MCF 10A (cell line): ENCODE measurements at regions of chr11 and their contacts with region 1.

Region 1: GRCh38 chr11:67583247-67584204 is at the start of gene GSTP1:
- DNase-seq: peak; percentile 89
- H3K4me3 Mint-ChIP-seq: peak within 1 kb of the TSS; percentile 84
- H3K27ac Mint-ChIP-seq: peak within 1 kb of the TSS; percentile 96
- H3K4me1 Mint-ChIP-seq: peaks cover 49% of the 10 kb centered on the region
- H3K27me3 Mint-ChIP-seq: peaks cover 18% of the 10 kb centered on the region
- CTCF ChIP-seq: peak; percentile 58
- total RNA-seq, gene GSTP1: 1,641 and 1,733 TPM in 2 replicates

Region 2: DNA sequence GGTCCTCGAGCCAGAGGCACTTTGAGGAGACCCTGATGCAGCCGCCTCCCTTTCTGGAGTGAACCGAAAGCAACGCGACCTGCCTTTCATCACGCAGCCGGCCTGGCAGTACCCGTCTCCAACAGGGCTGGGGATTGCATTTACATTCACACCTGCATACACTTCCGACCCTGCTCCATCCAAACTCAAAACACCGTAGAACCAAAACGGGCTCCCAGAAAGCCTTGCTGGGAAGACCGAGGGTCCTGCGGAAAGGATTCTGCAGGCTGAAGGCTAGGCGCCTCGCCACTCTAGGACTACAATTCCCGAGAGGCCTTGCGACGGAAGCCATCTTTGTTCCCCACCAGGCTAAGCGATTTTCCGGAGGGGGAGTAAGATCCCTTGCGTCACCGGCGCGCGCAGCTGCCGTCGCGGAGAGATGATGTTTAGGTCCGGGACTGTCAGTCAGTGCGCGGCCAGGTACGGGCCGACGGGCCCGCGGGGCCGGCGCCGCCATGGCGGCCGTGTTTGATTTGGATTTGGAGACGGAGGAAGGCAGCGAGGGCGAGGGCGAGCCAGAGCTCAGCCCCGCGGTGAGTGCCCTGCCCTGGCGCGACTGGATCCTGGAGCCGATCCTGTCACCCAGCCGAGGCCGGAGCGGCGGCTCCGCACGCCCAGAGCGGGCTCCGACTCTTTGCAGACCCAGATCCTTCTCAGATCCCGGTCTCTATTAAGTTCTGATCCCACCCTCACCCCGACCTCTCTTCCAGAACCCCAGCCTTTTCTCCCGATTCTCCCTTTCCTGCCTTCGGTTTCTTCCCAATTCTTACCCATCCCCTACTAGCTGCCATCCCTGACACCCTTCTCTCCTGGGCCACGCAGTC is 155.2 kb before region 1 on chr11 and contains the start of gene RPS6KB2:
- CTCF ChIA-PET with region 1: no interaction called
- POLR2A ChIA-PET with region 1: interaction called, 12 read pairs
- intact Hi-C with region 1: no loop called
- DNase-seq: peak; percentile 97
- H3K4me3 Mint-ChIP-seq: peak within 1 kb of the TSS; percentile 96
- H3K27ac Mint-ChIP-seq: peak within 1 kb of the TSS; percentile 92
- H3K4me1 Mint-ChIP-seq: peaks cover under 1% of the 10 kb centered on the region
- H3K27me3 Mint-ChIP-seq: no peaks in the 10 kb centered on the region
- CTCF ChIP-seq: no peak
- total RNA-seq, gene RPS6KB2: 49.8 and 60.1 TPM in 2 replicates

Region 3: GRCh38 chr11:67572747-67573419 is 10.6 kb before region 1 on chr11:
- CTCF ChIA-PET with region 1: interaction called, 34 read pairs
- POLR2A ChIA-PET with region 1: interaction called, 34 read pairs
- intact Hi-C with region 1: loop called (anchors 1 kb)
- DNase-seq: peak; percentile 78
- H3K4me3 Mint-ChIP-seq: no peak overlapping the region
- H3K27ac Mint-ChIP-seq: no peak overlapping the region
- H3K4me1 Mint-ChIP-seq: peaks cover 7% of the 10 kb centered on the region
- H3K27me3 Mint-ChIP-seq: no peaks in the 10 kb centered on the region
- CTCF ChIP-seq: peak; percentile 87

Region 4: DNA sequence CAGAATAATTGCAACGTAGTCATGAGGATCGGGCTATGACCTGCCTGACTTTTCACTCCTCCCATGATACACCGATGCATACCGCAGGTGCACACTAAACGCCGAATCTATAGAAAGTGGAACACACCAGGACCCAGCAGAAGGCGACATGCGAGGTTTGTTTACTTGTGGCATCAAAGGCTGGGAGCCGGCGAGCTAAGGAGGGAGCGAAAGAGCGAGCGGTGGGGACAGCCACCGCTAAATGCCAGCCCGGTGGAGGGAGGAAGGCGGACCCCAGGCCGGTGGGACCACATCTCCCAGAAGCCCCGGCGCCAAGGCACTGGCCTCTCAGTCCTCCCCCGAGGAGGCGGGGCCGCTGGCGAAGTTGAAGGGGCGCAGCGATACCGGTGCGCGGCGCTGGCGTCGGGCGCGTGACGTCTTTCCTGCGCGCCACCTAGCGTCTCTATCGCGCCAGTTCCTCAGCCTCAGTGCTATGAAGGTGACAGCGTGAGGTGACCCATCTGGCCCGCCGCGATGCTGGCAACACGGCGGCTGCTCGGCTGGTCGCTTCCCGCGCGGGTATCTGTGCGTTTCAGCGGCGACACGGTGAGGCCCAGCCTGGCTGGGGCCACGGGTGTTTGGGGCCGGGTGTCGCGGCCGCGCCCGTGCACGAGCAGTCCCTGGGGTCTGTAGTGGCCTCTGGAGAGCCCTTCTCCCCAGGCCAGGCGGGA is 23.1 kb after region 1 on chr11 and contains the start of gene NDUFV1:
- CTCF ChIA-PET with region 1: interaction called, 3 read pairs
- POLR2A ChIA-PET with region 1: interaction called, 25 read pairs
- intact Hi-C with region 1: no loop called
- DNase-seq: peak; percentile 91
- H3K4me3 Mint-ChIP-seq: peak within 1 kb of the TSS; percentile 80
- H3K27ac Mint-ChIP-seq: peak within 1 kb of the TSS; percentile 88
- H3K4me1 Mint-ChIP-seq: no peaks in the 10 kb centered on the region
- H3K27me3 Mint-ChIP-seq: no peaks in the 10 kb centered on the region
- CTCF ChIP-seq: peak; percentile 38
- total RNA-seq, gene NDUFV1: 158 and 223 TPM in 2 replicates

Region 5: GRCh38 chr11:67630228-67630942 is 46.9 kb after region 1 on chr11:
- CTCF ChIA-PET with region 1: interaction called, 3 read pairs
- POLR2A ChIA-PET with region 1: interaction called, 17 read pairs
- intact Hi-C with region 1: no loop called
- DNase-seq: peak; percentile 96
- H3K4me3 Mint-ChIP-seq: peak overlapping the region; percentile 79
- H3K27ac Mint-ChIP-seq: peak overlapping the region; percentile 52
- H3K4me1 Mint-ChIP-seq: no peaks in the 10 kb centered on the region
- H3K27me3 Mint-ChIP-seq: no peaks in the 10 kb centered on the region
- CTCF ChIP-seq: peak; percentile 70